Aorta (tissue), 5 donors: ENCODE measurements at regions of chr5 and their contacts with region 1.

Region 1: GRCh38 chr5:39570403-39571027 is 145.7 kb upstream of the DAB2 start:
- DNase-seq: no peak
- ATAC-seq: no peak
- H3K4me3 ChIP-seq: no peak overlapping the region
- H3K27ac ChIP-seq: no peak overlapping the region
- H3K4me1 ChIP-seq: no peaks in the 10 kb centered on the region
- H3K27me3 ChIP-seq: no peaks in the 10 kb centered on the region

Region 2: GRCh38 chr5:39217365-39218281 is 352.9 kb before region 1 on chr5:
- intact Hi-C with region 1: loop called (anchors 2 to 5 kb)
- DNase-seq: peak; percentile 79 to 81
- ATAC-seq: peak; percentile 91
- H3K4me3 ChIP-seq: no peak overlapping the region
- H3K27ac ChIP-seq: no peak overlapping the region
- H3K4me1 ChIP-seq: no peaks in the 10 kb centered on the region
- H3K27me3 ChIP-seq: no peaks in the 10 kb centered on the region